ENCODE measurements at regions of chr4 and their contacts with region 1.

Region 1: DNA sequence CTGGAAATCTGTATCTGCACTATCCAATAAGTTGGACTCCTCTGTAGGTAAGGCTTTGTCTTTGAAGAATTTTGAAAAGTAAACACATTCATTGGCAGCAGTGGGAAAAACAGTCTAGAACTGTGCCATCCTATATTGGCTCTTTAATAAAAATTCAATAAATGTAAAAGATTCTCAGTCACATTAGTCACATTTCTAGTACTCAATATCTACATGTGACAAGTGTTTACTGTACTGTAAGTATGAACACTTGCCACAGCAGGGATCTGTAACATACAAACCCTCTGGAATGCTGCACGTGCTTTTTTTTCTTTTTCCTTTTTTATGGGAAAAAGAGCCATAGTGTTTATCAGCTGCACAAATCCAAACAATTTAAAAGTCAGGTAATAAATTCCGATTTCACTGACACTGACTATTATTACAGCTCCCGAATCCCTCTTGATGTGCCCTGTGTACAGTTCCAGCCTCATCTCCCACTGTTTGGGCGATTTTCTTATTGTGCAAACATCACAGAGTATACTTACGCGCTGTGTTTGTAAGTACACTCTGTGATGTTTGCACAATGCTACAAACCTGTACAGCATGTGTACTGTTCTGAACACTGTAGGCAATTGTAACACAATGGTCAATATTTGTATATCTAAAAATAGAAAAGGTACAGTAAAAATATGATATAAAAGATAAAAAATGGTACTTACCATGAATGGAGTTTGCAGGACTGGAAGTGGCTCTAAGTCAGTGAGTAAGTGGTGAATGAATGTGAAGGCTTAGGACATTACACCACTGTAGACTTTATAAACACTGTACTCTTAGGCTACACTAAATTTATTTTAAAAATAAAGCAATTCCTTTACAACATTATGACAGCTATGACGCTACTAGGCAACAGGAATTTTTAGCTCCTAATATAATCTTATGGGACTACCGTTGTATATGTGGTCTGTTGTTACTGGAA is 8.7 kb downstream of the PYURF start:
- DNase-seq: no peak

Region 2: DNA sequence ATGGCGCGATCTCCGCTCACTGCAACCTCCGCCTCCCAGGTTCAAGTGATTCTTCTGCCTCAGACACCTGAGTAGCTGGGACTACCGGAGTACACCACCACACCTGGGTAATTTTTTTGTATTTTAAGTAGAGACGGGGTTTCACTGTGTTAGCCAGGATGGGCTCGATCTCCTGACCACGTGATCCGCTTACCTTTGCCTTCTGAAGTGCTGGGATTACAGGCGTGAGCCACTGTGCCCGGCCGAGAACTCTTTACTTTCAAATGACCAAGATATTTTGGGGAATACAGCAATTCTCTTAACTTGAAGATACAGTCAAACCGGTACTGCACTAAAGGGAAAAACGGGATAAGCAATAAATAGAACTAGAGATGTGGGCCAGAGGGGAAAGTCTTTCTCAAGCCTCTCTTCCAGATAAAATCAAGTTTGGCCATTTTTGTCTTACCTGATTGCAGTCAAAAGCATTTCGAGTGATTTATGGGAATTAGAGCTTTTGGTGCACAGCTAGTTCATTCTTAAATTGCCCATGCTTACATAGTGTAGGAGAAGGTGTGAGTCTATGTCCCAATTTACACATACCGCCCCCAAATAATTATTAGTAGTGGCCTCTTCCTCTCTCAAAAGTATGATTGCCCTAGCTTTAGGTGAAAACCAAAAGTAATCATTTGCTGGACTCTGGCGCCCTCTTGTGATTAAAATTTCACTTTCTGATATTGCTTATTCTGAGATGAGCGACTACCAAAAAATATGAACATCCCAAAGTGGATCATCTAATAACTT is 303.2 kb before region 1 on chr4:
- intact Hi-C with region 1: loop called in 1 of 2 experiments (anchors 5 kb)
- DNase-seq: no peak

Region 3: DNA sequence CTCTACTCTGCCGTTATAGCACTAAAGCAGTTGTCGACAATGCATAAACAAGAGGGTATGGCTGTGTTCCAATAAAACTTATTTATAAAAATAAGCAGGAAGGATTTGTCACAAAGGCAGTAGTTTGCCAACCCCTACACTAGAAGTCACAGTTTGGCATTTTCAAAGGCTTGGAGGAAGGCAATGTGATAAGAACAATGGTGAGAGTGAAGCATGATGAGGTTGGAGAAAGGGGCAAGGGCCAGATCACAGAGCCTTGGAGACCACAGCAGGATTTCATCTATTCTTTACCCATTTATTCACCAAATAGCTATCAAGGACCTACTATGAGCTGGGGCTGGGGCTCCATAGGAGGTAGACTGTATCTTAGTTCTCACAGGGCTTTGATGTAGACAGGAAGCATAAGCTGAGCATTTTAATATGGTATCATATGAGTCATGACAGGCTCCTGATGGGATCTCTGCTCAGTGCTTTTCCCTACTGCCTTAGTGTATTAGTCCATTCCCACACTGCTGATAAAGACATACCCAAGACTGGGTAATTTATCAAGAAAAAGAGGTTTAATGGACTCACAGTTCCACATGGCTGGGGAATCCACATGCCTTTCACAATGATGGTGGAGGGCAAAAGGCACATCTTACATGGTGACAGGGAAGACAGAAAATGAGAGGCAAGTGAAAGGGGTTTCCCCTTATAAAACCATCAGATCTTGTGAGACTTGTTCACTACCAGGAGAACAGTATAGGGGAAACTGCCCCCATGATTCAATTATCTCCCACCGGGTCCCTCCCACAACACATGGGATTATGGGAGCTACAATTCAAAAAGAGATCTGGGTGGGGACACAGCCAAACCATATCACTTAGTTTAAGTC is 289.4 kb before region 1 on chr4:
- intact Hi-C with region 1: loop called in 1 of 2 experiments (anchors 5 kb)
- DNase-seq: no peak

Region 4: GRCh38 chr4:88366460-88366859 is 148.4 kb before region 1 on chr4:
- intact Hi-C with region 1: loop called (anchors 10 kb)
- DNase-seq: no peak

Region 5: DNA sequence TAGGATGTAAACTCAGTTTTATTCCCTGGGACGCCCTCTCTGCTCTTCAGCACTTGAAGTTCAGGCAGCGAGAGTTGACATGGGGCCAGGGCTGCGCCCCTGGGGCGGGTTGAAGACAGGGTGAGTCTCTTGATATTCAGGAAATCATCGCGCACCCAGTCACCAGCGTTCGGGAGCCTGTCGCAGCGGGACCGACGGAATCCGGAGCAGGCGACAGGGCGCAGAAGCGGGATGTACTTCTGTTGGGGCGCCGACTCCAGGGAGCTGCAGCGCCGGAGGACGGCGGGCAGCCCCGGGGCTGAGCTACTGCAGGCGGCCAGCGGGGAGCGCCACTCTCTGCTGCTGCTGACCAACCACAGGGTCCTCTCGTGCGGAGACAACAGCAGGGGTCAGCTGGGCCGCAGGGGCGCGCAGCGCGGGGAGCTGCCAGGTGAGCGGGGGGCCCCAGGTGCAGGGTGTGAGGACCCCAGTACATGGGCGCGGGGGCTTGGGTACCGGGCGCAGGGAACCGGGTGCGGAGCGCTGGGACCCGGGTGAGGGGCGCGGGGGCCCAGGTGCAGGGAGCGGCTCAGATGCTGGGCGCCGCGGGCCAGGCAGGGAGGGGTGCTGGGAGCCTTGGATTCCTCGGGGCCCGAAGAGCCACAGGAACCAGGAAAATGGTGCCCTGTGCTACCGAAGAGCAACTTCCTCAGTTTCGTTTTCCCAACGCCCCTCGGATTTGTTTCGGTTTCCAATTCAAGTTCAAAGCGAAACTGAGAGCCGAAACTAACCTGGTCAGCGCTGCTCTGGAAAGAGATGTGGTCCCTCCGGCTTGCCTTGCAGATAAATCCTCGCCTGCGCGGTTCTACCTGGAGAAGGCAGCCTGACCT is 135.9 kb before region 1 on chr4 and contains the start of gene HERC6:
- intact Hi-C with region 1: loop called in 1 of 2 experiments (anchors 10 kb)
- DNase-seq: peak; percentile 90
- total RNA-seq, gene HERC6: 6.2 to 7.3 TPM